ENCODE measurements at regions of chr7 and their contacts with region 1.

Region 1: GRCh38 chr7:158244873-158245723 is 342.5 kb downstream of the PTPRN2 start:
- DNase-seq: peak; percentile 79

Region 2: DNA sequence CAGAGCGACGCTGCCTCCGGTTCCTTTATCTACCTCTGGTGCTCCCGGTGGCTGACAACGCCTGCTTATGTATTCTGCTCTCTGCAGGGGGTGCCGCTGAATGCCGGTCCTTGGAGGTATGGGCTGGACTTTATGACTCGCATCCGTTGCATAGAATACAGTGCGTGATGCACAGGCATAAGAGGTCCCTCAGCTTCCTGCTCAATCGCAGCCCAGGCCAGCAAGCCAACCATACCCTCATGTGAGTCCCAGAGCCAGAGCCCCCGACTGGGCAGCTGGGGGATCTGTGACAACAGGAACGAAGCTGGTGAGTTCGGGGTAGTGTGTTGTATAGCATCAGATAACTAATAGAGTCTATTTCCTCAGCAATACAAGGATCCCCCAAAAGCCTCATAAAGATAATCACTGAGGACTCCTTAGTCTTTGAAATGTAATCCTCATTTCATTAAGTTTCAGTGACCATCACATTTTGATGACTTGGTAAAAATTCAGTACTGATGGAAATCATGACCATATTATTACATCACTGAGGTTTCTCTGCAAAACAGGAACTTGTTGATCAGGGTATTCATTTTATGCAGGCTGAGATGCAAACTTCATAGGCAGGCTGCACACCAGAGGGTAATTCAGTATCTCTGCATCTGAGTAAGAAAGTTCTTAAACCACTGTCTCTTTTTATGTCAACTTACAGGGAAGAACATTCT is 265.3 kb before region 1 on chr7:
- intact Hi-C with region 1: loop called in 1 of 2 experiments (anchors 5 kb)
- DNase-seq: peak; percentile 66

Region 3: GRCh38 chr7:158282461-158283001 is 37.4 kb after region 1 on chr7:
- intact Hi-C with region 1: no loop called
- DNase-seq: peak; percentile 58

Measured in posterior vena cava (tissue), 2 donors.